SK-N-SH (cell line): ENCODE measurements at regions of chr1 and their contacts with region 1.

Region 1: DNA sequence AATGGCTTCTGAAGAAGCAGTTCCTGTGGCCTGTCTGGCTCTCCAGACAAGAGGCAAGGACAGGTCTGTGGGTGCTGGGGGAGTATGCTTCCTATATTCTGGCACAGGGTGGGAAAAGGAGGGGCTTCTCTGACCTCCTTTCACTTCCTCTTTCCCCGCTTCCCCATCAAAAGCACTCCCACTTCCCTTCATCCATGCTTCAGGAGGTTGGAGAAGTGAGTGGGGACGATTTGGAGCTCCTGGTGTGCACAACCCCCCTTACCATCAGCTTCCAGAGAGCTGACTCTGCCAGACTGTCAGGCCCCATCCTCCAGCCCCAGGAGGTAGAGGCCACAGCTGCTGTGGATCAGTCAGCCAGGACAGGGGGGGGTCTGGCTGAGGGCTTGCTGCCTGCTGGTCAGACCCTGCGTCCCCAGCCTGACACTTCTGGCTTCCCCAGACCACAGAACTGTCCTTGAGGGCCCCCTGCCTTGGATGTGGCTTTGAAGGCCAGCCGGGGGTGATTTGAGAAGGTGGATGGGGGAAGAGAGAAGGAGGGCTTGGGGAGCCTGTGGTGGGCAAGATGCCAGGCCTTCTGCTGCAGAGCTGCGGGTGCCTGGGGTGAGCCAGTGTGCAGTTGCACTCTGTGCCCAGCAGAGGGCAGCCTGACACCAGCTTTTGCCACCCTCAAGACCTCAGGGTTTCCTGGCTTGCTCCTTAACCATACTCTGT is 21.5 kb upstream of the TMEM222 start:
- DNase-seq: peak; percentile 90
- H3K4me3 ChIP-seq: peak overlapping the region; percentile 12 to 14; a peak in 2 of 4 replicates
- H3K27ac ChIP-seq: peak overlapping the region; percentile 92 to 99
- H3K4me1 ChIP-seq: peaks cover 28 to 52% of the 10 kb centered on the region in 2 experiments
- H3K27me3 ChIP-seq: no peaks in the 10 kb centered on the region
- CTCF ChIP-seq: peak; percentile 92
- EP300 ChIP-seq: peak; percentile 40 to 70; a peak in 3 of 4 replicates
- RAD21 ChIP-seq: peak; percentile 96

Region 2: GRCh38 chr1:27102707-27103491 is 197.6 kb before region 1 on chr1:
- CTCF ChIA-PET with region 1: interaction called, 131 read pairs
- POLR2A ChIA-PET with region 1: no interaction called
- DNase-seq: peak; percentile 93
- H3K4me3 ChIP-seq: no peak overlapping the region; a peak in 1 of 4 replicates
- H3K27ac ChIP-seq: no peak overlapping the region
- H3K4me1 ChIP-seq: peaks cover 15 to 19% of the 10 kb centered on the region in 2 experiments; a peak in 3 of 4 replicates
- H3K27me3 ChIP-seq: no peaks in the 10 kb centered on the region
- CTCF ChIP-seq: peak; percentile 95
- EP300 ChIP-seq: no peak
- RAD21 ChIP-seq: peak; percentile 93

Region 3: GRCh38 chr1:27203946-27204345 is 96.5 kb before region 1 on chr1:
- CTCF ChIA-PET with region 1: interaction called, 10 read pairs
- POLR2A ChIA-PET with region 1: no interaction called
- DNase-seq: no peak
- H3K4me3 ChIP-seq: no peak overlapping the region
- H3K27ac ChIP-seq: no peak overlapping the region
- H3K4me1 ChIP-seq: no peaks in the 10 kb centered on the region
- H3K27me3 ChIP-seq: no peaks in the 10 kb centered on the region
- CTCF ChIP-seq: no peak
- EP300 ChIP-seq: no peak
- RAD21 ChIP-seq: no peak

Region 4: GRCh38 chr1:27332536-27333281 is 32.2 kb after region 1 on chr1:
- CTCF ChIA-PET with region 1: interaction called, 185 read pairs
- POLR2A ChIA-PET with region 1: no interaction called
- DNase-seq: peak; percentile 87
- H3K4me3 ChIP-seq: no peak overlapping the region; a peak in 1 of 4 replicates
- H3K27ac ChIP-seq: no peak overlapping the region
- H3K4me1 ChIP-seq: no peaks in the 10 kb centered on the region
- H3K27me3 ChIP-seq: no peaks in the 10 kb centered on the region
- CTCF ChIP-seq: peak; percentile 85
- EP300 ChIP-seq: no peak
- RAD21 ChIP-seq: peak; percentile 48

Region 5: DNA sequence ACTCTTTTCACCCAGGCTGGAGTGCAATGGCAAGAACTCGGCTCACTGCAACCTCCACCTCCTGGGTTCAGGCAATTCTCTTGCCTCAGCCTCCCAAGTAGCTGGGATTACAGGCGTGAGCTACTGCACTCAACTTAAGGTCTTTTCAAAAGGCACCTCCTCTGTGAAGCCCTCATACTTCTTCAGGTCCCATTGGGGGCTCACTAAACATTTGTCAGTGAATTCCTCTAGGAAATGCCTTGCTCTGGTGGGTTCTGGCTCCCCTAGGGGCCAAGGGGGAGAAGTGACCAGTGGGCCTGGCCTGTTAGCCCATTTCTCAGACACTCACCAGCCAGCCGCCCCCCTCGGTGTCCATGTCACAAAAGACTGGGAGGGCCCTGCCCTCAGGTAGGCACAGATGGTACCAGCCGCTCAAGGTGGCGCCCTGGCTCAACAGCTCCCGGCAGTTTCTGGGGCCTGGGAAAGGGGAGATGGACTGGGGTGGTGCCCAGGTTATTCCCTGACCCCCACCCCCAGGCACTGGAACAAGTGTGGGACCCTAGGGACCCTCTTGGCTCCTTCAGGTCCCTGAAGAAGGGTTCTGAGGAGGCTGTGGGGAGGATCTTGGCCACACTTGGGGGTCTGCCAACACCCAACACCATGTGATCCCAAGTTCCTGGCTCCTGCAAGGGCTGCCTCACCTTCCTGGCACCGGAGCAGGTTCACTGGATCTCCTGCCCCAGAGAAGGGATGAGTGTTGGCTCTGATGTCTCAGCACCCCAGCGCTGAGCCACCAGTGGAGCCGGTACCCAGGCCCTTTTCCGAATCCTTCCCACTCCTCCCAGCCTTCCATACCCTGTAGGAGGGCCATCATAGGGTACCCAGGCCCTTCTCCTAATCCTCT is 72.6 kb after region 1 on chr1:
- CTCF ChIA-PET with region 1: interaction called, 92 read pairs
- POLR2A ChIA-PET with region 1: no interaction called
- DNase-seq: peak; percentile 61
- H3K4me3 ChIP-seq: no peak overlapping the region
- H3K27ac ChIP-seq: no peak overlapping the region
- H3K4me1 ChIP-seq: no peaks in the 10 kb centered on the region
- H3K27me3 ChIP-seq: no peaks in the 10 kb centered on the region
- CTCF ChIP-seq: peak; percentile 44
- EP300 ChIP-seq: no peak
- RAD21 ChIP-seq: peak; percentile 9; the same call in 1 of the 2 replicates

Region 6: DNA sequence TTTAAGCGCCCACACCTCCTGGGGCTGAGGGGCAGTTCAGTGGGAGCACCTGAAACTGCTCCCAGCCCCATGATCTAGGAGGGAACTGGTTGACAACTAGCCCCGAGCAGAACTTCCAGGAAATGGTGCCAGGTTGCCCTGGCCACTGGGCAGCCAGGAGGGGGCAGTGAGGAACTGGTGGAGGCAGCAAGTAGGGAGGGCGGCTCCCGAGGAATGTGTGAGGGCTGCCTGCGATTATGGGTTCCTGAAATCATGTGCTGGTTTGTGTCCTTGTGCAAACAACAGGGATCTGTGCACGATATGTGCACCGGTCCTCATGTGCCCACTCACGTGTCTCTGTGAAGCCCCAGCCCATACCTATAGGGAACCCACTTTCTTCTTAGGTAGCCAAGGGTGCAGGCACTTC is 101.9 kb after region 1 on chr1:
- CTCF ChIA-PET with region 1: interaction called, 731 read pairs
- POLR2A ChIA-PET with region 1: no interaction called
- DNase-seq: peak; percentile 54
- H3K4me3 ChIP-seq: no peak overlapping the region
- H3K27ac ChIP-seq: no peak overlapping the region
- H3K4me1 ChIP-seq: peaks cover 0 to 4% of the 10 kb centered on the region in 2 experiments; a peak in 1 of 4 replicates
- H3K27me3 ChIP-seq: no peaks in the 10 kb centered on the region
- CTCF ChIP-seq: peak; percentile 47
- EP300 ChIP-seq: no peak
- RAD21 ChIP-seq: peak; percentile 40

Region 7: GRCh38 chr1:27992276-27992675 is 691.8 kb after region 1 on chr1:
- CTCF ChIA-PET with region 1: no interaction called
- POLR2A ChIA-PET with region 1: no interaction called
- DNase-seq: no peak
- H3K4me3 ChIP-seq: no peak overlapping the region
- H3K27ac ChIP-seq: no peak overlapping the region
- H3K4me1 ChIP-seq: no peaks in the 10 kb centered on the region
- H3K27me3 ChIP-seq: no peaks in the 10 kb centered on the region
- CTCF ChIP-seq: no peak
- EP300 ChIP-seq: no peak
- RAD21 ChIP-seq: no peak